IMR-90 (cell line): ENCODE measurements at regions of chr16 and their contacts with region 1.

Region 1: DNA sequence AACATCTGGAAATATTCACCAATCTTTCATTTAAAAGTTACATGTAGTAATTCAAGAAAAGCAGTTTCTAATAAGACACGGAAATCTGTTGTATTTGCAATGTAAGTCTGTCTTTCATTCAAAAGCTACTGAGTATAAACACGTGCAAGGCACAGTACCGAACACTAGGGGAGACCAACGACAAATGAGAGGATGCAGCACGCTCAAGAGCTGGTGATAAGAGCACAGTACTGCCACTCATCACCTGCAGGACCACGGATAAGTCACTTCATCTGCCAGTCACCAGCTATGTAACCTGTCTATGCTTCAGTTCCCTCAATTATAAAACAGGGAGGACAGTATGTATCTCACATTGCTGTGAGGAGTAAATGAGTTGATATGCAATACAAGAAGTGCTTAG is 67.1 kb downstream of the CLEC18A start:
- DNase-seq: peak; percentile 2
- ATAC-seq: no peak
- H3K4me3 ChIP-seq: no peak overlapping the region
- H3K27ac ChIP-seq: no peak overlapping the region
- H3K4me1 ChIP-seq: peaks cover 2% of the 10 kb centered on the region
- H3K27me3 ChIP-seq: no peaks in the 10 kb centered on the region
- CTCF ChIP-seq: no peak
- POLR2A ChIP-seq: no peak
- RAD21 ChIP-seq: no peak

Region 2: GRCh38 chr16:68626557-68626956 is 1391.7 kb before region 1 on chr16:
- CTCF ChIA-PET with region 1: no interaction called
- POLR2A ChIA-PET with region 1: interaction called, 10 read pairs
- dilution Hi-C with region 1: no loop called
- in situ Hi-C with region 1: no loop called
- intact Hi-C with region 1: no loop called
- DNase-seq: no peak
- ATAC-seq: no peak
- H3K4me3 ChIP-seq: no peak overlapping the region
- H3K27ac ChIP-seq: no peak overlapping the region
- H3K4me1 ChIP-seq: no peaks in the 10 kb centered on the region
- H3K27me3 ChIP-seq: no peaks in the 10 kb centered on the region; the same call in 1 of the 2 replicates
- CTCF ChIP-seq: no peak
- POLR2A ChIP-seq: no peak
- RAD21 ChIP-seq: no peak

Region 3: DNA sequence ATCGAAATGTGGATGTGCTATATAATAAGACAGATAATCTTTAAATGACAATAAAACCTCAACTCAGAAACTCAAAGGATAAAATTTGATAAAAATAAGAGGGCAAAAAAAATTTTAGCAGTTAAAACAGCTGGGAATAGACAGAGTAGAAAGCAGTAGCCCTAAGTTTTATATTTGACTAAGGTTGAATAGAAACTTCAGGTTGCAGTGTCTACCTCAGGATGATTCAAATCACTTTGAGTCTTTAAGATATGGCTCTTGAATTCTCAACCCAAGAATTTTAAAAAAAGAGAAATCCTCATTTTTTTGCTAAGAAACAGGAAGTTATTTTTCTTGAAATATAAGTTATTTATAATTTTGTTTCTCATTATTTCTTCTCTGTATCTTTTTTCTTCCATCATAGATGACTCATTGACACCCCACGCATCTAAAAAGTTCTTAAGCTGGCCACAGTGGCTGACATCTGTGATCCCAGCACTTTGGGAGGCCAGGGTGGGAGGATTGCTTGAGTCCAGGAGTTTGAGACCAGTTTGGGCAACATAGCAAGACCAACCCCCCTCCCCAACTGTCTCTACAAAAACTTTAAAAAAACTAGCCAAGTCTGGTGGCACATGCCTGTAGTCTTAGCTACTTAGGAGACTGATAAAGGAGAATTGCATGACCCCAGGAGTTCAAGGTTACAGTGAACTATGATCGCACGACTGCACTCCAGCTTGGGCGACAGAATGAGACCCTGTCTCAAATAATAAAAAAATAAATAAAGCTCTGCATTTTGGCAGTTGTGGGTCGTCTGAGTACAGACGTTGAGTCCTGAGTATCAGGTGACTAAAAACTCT is 428.6 kb before region 1 on chr16:
- CTCF ChIA-PET with region 1: no interaction called
- POLR2A ChIA-PET with region 1: no interaction called
- dilution Hi-C with region 1: no loop called
- in situ Hi-C with region 1: no loop called
- intact Hi-C with region 1: no loop called
- DNase-seq: no peak
- ATAC-seq: no peak
- H3K4me3 ChIP-seq: no peak overlapping the region
- H3K27ac ChIP-seq: no peak overlapping the region
- H3K4me1 ChIP-seq: no peaks in the 10 kb centered on the region
- H3K27me3 ChIP-seq: no peaks in the 10 kb centered on the region
- CTCF ChIP-seq: no peak
- POLR2A ChIP-seq: no peak
- RAD21 ChIP-seq: no peak